Endothelial cell of umbilical vein (primary cell): ENCODE measurements at regions of chr3 and their contacts with region 1.

Region 1: GRCh38 chr3:30511524-30512278 is 94.7 kb upstream of the TGFBR2 start:
- DNase-seq: peak; percentile 64
- H3K4me3 ChIP-seq: no peak overlapping the region
- H3K27ac ChIP-seq: peak overlapping the region; percentile 72
- H3K4me1 ChIP-seq: peaks cover 49% of the 10 kb centered on the region
- H3K27me3 ChIP-seq: no peaks in the 10 kb centered on the region
- CTCF ChIP-seq: no peak
- POLR2A ChIP-seq: no peak

Region 2: DNA sequence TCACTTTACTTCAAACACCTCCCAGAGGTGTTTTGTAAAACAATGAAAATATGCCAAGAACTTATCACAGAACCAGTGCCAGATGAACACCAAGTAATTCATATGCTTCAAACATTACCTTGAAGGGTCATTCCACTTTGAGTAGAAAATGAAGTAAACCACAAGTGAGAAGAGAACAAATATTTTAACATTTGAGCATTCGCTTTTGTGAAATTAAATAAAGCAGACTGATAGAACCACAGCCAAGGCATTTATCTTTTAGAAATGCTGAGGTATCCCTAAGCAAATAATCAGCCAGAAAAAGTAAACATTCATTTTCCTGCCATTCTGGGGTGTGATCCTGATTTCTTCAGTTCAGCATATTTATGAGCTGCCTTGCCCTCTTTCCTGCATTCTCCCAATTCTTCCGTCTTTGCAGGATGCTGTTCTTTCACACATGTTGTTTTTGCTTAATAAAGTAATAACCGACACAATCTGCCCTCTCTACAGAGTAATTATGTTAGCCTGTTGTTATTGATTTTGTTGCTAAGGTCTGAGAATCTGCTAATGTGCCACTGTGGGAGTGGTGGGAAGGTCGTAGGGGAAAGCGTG is 140.9 kb before region 1 on chr3:
- CTCF ChIA-PET with region 1: no interaction called
- POLR2A ChIA-PET with region 1: no interaction called
- dilution Hi-C with region 1: no loop called
- intact Hi-C with region 1: loop called (anchors 10 kb)
- DNase-seq: peak; percentile 95
- H3K4me3 ChIP-seq: no peak overlapping the region
- H3K27ac ChIP-seq: peak overlapping the region; percentile 49
- H3K4me1 ChIP-seq: peaks cover 17% of the 10 kb centered on the region
- H3K27me3 ChIP-seq: no peaks in the 10 kb centered on the region
- CTCF ChIP-seq: no peak
- POLR2A ChIP-seq: peak; percentile 51

Region 3: DNA sequence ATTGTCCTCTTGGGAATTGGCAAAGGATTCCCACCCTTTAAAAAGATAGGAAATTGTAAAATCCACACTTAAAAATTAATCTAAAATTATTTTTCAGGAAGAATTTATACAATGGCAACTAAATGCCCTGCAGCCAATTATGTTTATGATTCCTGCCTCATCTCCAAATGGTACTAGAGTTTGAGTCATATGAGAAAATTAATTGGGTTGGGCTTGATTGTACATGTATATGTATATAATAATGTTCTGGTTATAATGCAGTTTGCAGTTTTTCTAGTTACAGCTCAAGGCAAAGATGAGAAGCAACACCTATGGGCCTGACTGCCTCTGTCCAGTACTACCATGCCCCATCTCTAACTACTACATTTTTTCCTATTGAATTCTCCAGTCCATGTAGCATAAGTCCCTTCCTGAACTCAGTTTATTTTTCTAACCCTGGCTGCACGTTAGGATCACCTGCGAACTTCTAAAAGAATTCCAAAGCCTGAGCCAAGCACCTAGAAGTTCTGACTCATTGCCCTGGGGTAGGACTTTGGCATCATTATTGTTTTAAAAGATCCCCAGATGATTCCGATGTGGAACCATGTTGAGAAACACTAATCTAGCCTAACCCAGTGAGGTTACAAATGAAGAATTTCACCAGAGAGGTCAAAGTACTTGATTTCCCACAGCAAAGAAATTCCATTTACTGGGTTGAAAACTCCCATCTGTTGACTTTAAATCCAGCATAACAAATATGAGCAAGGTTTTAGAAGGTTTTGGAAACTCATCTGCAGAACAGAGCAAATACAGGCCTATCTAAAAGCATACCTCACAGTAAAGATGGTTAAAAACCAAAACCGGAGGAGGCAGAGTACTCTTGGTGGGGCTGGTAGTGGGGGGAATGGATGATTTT is 114.1 kb after region 1 on chr3:
- CTCF ChIA-PET with region 1: no interaction called
- POLR2A ChIA-PET with region 1: no interaction called
- dilution Hi-C with region 1: no loop called
- intact Hi-C with region 1: no loop called
- DNase-seq: peak; percentile 64
- H3K4me3 ChIP-seq: no peak overlapping the region
- H3K27ac ChIP-seq: peak overlapping the region; percentile 34
- H3K4me1 ChIP-seq: peaks cover 86% of the 10 kb centered on the region
- H3K27me3 ChIP-seq: no peaks in the 10 kb centered on the region
- CTCF ChIP-seq: no peak
- POLR2A ChIP-seq: no peak